Activated T-helper 1 cell treated with anti-CD3 and anti-CD28 coated beads, Interleukin-12 subunit alpha, Interleukin-12 subunit beta, Interleukin-2, Interleukin-4 antibody, amounts not matched to agents 30 ng/mL and 10 ng/mL and 1 ng/mL, durations not matched to agents 14 hours and 24 hours and 36 hours (primary cell): ENCODE measurements at regions of chr12 and their contacts with region 1.

Region 1: GRCh38 chr12:75738486-75738885 is 227.1 kb upstream of the KRR1 start:
- DNase-seq: peak; percentile 9
- H3K4me3 Mint-ChIP-seq: no peak overlapping the region
- H3K27ac Mint-ChIP-seq: peak overlapping the region; percentile 53
- H3K4me1 Mint-ChIP-seq: peaks cover 22% of the 10 kb centered on the region
- H3K27me3 Mint-ChIP-seq: peaks cover 5% of the 10 kb centered on the region

Region 2: GRCh38 chr12:75154388-75154787 is 584.1 kb before region 1 on chr12:
- intact Hi-C with region 1: no loop called
- DNase-seq: no peak
- H3K4me3 Mint-ChIP-seq: no peak overlapping the region
- H3K27ac Mint-ChIP-seq: no peak overlapping the region
- H3K4me1 Mint-ChIP-seq: no peaks in the 10 kb centered on the region
- H3K27me3 Mint-ChIP-seq: no peaks in the 10 kb centered on the region

Region 3: GRCh38 chr12:75658901-75659383 is 79.5 kb before region 1 on chr12:
- intact Hi-C with region 1: loop called (anchors 1 kb)
- DNase-seq: no peak
- H3K4me3 Mint-ChIP-seq: no peak overlapping the region
- H3K27ac Mint-ChIP-seq: peak overlapping the region; percentile 33
- H3K4me1 Mint-ChIP-seq: peaks cover 36% of the 10 kb centered on the region
- H3K27me3 Mint-ChIP-seq: no peaks in the 10 kb centered on the region

Region 4: GRCh38 chr12:75790219-75790618 is 51.7 kb after region 1 on chr12:
- intact Hi-C with region 1: loop called (anchors 5 kb)
- DNase-seq: no peak
- H3K4me3 Mint-ChIP-seq: no peak overlapping the region
- H3K27ac Mint-ChIP-seq: no peak overlapping the region
- H3K4me1 Mint-ChIP-seq: peaks cover 5% of the 10 kb centered on the region
- H3K27me3 Mint-ChIP-seq: peaks cover 17% of the 10 kb centered on the region

Region 5: GRCh38 chr12:75939016-75939642 is 200.6 kb after region 1 on chr12:
- intact Hi-C with region 1: loop called (anchors 1 kb)
- DNase-seq: no peak
- H3K4me3 Mint-ChIP-seq: no peak overlapping the region
- H3K27ac Mint-ChIP-seq: no peak overlapping the region
- H3K4me1 Mint-ChIP-seq: peaks cover 16% of the 10 kb centered on the region
- H3K27me3 Mint-ChIP-seq: peaks cover 4% of the 10 kb centered on the region

Region 6: GRCh38 chr12:76037130-76038103 is 298.9 kb after region 1 on chr12:
- intact Hi-C with region 1: loop called (anchors 2 kb)
- DNase-seq: peak; percentile 26
- H3K4me3 Mint-ChIP-seq: no peak overlapping the region
- H3K27ac Mint-ChIP-seq: peak overlapping the region; percentile 0
- H3K4me1 Mint-ChIP-seq: peaks cover 24% of the 10 kb centered on the region
- H3K27me3 Mint-ChIP-seq: no peaks in the 10 kb centered on the region